GM12878 (cell line): ENCODE measurements at regions of chr5 and their contacts with region 1.

Region 1: DNA sequence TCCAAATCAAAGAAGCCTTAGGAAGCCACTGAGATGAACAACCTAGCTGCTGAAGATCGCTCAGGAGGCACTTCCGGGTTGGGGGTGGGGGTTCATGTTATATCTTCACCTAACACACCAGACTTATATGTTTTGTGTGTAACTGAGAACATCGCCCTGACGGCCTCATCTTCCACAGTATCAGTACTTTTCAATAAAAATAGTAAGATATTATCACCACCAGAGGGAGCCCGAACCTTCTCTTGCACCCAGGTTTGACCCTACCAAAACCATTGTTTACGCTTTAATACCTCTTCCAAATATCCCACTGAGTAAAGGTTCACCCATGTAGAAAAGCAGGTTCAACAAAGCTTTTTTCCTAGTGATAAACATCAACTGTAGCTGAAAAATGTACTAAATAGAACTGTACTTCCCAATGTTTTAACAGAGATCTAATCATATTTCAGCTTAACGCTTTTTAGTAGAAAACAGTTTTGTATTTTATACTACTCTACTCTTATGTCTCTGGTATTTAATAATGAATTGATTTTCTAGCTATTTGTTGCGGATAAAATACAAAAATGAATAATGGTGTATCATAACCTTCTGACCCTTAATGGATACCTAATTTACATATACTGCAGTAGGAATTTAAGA is 244.0 kb downstream of the EPB41L4A start:
- DNase-seq: no peak
- ATAC-seq: peak; percentile 95
- H3K4me3 ChIP-seq: no peak overlapping the region
- H3K27ac ChIP-seq: no peak overlapping the region
- H3K4me1 ChIP-seq: no peaks in the 10 kb centered on the region
- H3K27me3 ChIP-seq: peaks cover 0 to 2% of the 10 kb centered on the region in 2 experiments; a peak in 1 of 4 replicates
- CTCF ChIP-seq: peak; percentile 44 to 75 (median 66)
- EP300 ChIP-seq: no peak
- POLR2A ChIP-seq: no peak
- RAD21 ChIP-seq: peak; percentile 71

Region 2: DNA sequence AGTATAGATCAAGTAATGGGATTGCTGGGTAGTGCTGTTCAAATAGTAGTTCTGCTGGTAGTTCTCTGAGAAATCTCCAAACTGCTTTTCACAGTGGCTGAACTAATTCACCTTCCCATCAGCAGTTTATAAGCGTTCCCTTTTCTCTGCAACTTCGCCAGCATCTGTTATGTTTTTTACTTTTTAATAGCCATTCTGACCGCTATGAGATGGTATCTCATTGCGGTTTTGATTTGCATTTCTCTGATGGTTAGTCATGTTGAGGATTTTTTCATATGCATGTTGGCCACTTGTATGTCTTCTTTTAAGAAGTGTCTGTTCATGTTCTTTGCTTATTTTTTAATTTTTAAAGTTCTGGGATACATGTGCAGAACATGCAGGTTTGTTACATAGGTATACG is 138.9 kb before region 1 on chr5:
- CTCF ChIA-PET with region 1: no interaction called
- POLR2A ChIA-PET with region 1: no interaction called
- RAD21 ChIA-PET with region 1: no interaction called
- SMC1A ChIA-PET with region 1: no interaction called
- in situ Hi-C with region 1: no loop called
- intact Hi-C with region 1: no loop called
- DNase-seq: no peak
- ATAC-seq: no peak
- H3K4me3 ChIP-seq: no peak overlapping the region
- H3K27ac ChIP-seq: no peak overlapping the region
- H3K4me1 ChIP-seq: no peaks in the 10 kb centered on the region
- H3K27me3 ChIP-seq: no peaks in the 10 kb centered on the region
- CTCF ChIP-seq: no peak
- EP300 ChIP-seq: no peak
- POLR2A ChIP-seq: no peak
- RAD21 ChIP-seq: no peak

Region 3: DNA sequence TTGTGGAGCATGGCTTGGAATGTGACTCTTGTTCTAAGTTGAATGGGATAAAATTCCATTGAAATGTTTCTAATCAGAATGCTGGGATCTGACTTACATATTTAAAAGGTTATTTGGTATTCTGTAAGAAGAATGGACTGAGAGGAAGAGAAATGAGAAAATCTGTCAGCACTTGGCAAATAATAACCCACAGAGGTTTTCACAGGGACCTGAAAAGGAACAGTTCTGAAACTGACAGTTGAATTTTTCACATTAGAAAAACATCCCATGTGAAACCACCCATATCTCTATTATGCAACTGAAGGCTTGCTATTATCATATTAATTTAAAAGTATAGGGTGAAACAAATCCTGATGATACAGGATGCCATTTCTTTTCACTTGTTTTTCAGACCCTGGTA is 58.7 kb before region 1 on chr5:
- CTCF ChIA-PET with region 1: no interaction called
- POLR2A ChIA-PET with region 1: no interaction called
- RAD21 ChIA-PET with region 1: no interaction called
- SMC1A ChIA-PET with region 1: no interaction called
- in situ Hi-C with region 1: no loop called
- intact Hi-C with region 1: no loop called
- DNase-seq: peak; percentile 66
- ATAC-seq: peak; percentile 80
- H3K4me3 ChIP-seq: 0 out of 2 replicates have a peak overlapping the region, but pooled peaks have one; percentile 8
- H3K27ac ChIP-seq: peak overlapping the region; percentile 58
- H3K4me1 ChIP-seq: peaks cover 24% of the 10 kb centered on the region
- H3K27me3 ChIP-seq: no peaks in the 10 kb centered on the region
- CTCF ChIP-seq: no peak
- EP300 ChIP-seq: peak in 1 of 2 experiments; percentile 82; a peak in 1 of 4 replicates
- POLR2A ChIP-seq: no peak
- RAD21 ChIP-seq: no peak

Region 4: DNA sequence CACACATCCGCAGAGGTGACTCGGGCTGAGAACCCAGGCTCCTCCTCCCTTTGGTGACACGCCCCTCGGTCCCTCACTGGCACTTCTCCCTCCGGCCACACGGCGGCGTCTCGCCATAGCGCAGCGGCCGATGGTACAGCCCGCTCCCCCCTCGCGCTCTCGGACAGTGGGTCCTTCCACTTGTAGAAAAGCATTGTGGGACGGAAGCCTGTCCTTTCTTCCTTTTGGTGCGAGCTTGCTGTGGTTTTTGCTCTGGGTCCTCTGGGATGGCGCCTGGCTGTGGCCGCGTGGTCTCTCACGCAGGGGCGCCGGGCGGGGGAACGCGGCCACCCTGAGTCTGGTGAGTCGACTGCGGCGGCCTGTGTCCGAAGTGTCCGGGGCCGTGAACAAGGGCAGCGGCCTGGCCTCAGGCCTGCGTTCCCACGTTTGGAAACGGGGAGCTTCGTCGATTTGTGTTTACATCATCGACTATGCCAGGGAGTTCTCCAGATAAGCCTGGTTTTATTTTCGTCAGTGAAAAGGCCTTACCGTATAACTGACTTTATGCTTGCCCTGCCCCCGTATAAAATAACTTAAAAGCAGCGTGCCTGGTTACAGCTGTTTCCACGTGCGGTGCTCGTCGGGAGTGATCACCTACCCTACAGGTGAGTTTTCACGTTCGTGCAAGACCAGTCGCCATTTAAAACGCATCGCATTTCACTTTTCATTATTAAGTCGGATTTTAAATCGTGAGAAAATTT is 14.3 kb before region 1 on chr5:
- CTCF ChIA-PET with region 1: interaction called, 85 read pairs
- POLR2A ChIA-PET with region 1: interaction called, 3 read pairs
- RAD21 ChIA-PET with region 1: interaction called, 6 read pairs
- SMC1A ChIA-PET with region 1: interaction called, 9 read pairs
- in situ Hi-C with region 1: no loop called
- intact Hi-C with region 1: no loop called
- DNase-seq: peak; percentile 79
- ATAC-seq: peak; percentile 97
- H3K4me3 ChIP-seq: peak overlapping the region; percentile 99
- H3K27ac ChIP-seq: peak overlapping the region; percentile 70
- H3K4me1 ChIP-seq: no peaks in the 10 kb centered on the region
- H3K27me3 ChIP-seq: no peaks in the 10 kb centered on the region
- CTCF ChIP-seq: peak; percentile 99 to 100 (median 100); a peak in 5 of 6 replicates
- EP300 ChIP-seq: no peak; a peak in 1 of 4 replicates
- POLR2A ChIP-seq: peak; percentile 100
- RAD21 ChIP-seq: peak; percentile 42; the same call in 1 of the 2 replicates

Region 5: GRCh38 chr5:112208699-112209615 is 33.9 kb after region 1 on chr5:
- CTCF ChIA-PET with region 1: interaction called, 20 read pairs
- POLR2A ChIA-PET with region 1: no interaction called
- RAD21 ChIA-PET with region 1: interaction called, 4 read pairs
- SMC1A ChIA-PET with region 1: interaction called, 4 read pairs
- in situ Hi-C with region 1: no loop called
- intact Hi-C with region 1: no loop called
- DNase-seq: no peak
- ATAC-seq: peak; percentile 88
- H3K4me3 ChIP-seq: no peak overlapping the region
- H3K27ac ChIP-seq: no peak overlapping the region
- H3K4me1 ChIP-seq: no peaks in the 10 kb centered on the region
- H3K27me3 ChIP-seq: no peaks in the 10 kb centered on the region
- CTCF ChIP-seq: no peak
- EP300 ChIP-seq: no peak
- POLR2A ChIP-seq: no peak
- RAD21 ChIP-seq: no peak

Region 6: GRCh38 chr5:112419986-112420864 is 245.1 kb after region 1 on chr5:
- CTCF ChIA-PET with region 1: interaction called, 78 read pairs
- POLR2A ChIA-PET with region 1: no interaction called
- RAD21 ChIA-PET with region 1: interaction called, 42 read pairs
- SMC1A ChIA-PET with region 1: interaction called, 30 read pairs
- in situ Hi-C with region 1: loop called (anchors 5 kb)
- intact Hi-C with region 1: loop called (anchors 1 kb)
- DNase-seq: peak; percentile 9
- ATAC-seq: peak; percentile 97
- H3K4me3 ChIP-seq: peak overlapping the region; percentile 62
- H3K27ac ChIP-seq: no peak overlapping the region
- H3K4me1 ChIP-seq: no peaks in the 10 kb centered on the region
- H3K27me3 ChIP-seq: peaks cover 0 to 10% of the 10 kb centered on the region in 2 experiments
- CTCF ChIP-seq: peak; percentile 75 to 87 (median 87)
- EP300 ChIP-seq: no peak
- POLR2A ChIP-seq: no peak
- RAD21 ChIP-seq: peak; percentile 82

Region 7: DNA sequence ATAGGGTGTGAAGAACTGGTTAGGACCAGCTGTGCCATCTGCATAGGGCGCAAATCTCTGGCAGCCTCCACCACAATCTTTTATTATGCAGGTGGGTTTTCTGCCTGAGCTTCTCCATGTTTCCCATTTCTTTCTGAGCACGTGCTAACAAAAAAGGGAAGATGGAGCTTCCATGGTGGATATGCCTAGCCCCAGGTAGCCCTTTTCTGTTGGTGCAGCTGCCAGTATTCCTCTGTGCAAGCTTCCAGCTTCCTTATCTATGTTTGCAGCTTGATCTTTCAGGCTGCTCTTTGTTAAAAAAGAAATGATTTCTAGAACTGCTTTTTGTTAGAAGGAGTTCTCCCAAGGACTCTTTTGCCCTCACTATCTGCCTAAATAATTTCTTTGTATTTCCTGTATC is 339.0 kb after region 1 on chr5:
- CTCF ChIA-PET with region 1: no interaction called
- POLR2A ChIA-PET with region 1: no interaction called
- RAD21 ChIA-PET with region 1: no interaction called
- SMC1A ChIA-PET with region 1: no interaction called
- in situ Hi-C with region 1: no loop called
- intact Hi-C with region 1: no loop called
- DNase-seq: no peak
- ATAC-seq: no peak
- H3K4me3 ChIP-seq: no peak overlapping the region
- H3K27ac ChIP-seq: no peak overlapping the region
- H3K4me1 ChIP-seq: no peaks in the 10 kb centered on the region
- H3K27me3 ChIP-seq: no peaks in the 10 kb centered on the region
- CTCF ChIP-seq: no peak
- EP300 ChIP-seq: no peak
- POLR2A ChIP-seq: no peak
- RAD21 ChIP-seq: no peak

Region 8: GRCh38 chr5:112529525-112529924 is 354.4 kb after region 1 on chr5:
- CTCF ChIA-PET with region 1: interaction called, 51 read pairs
- POLR2A ChIA-PET with region 1: no interaction called
- RAD21 ChIA-PET with region 1: interaction called, 4 read pairs
- SMC1A ChIA-PET with region 1: interaction called, 22 read pairs
- in situ Hi-C with region 1: no loop called
- intact Hi-C with region 1: loop called (anchors 5 kb)
- DNase-seq: no peak
- ATAC-seq: peak; percentile 71
- H3K4me3 ChIP-seq: no peak overlapping the region
- H3K27ac ChIP-seq: no peak overlapping the region
- H3K4me1 ChIP-seq: peaks cover 26% of the 10 kb centered on the region
- H3K27me3 ChIP-seq: no peaks in the 10 kb centered on the region
- CTCF ChIP-seq: peak; percentile 57 to 61 (median 58); a peak in 5 of 6 replicates
- EP300 ChIP-seq: no peak
- POLR2A ChIP-seq: no peak
- RAD21 ChIP-seq: peak; percentile 65